CD14-positive monocyte (primary cell): ENCODE measurements at regions of chr7 and their contacts with region 1.

Region 1: GRCh38 chr7:24812310-24812945 is 55.2 kb upstream of the GSDME start:
- DNase-seq: peak; percentile 45 to 58 (median 54)
- H3K4me3 ChIP-seq: no peak overlapping the region
- H3K4me3 Mint-ChIP-seq: no peak overlapping the region
- H3K27ac ChIP-seq: no peak overlapping the region
- H3K27ac Mint-ChIP-seq: no peak overlapping the region
- H3K4me1 ChIP-seq: no peaks in the 10 kb centered on the region
- H3K4me1 Mint-ChIP-seq: peaks cover 5% of the 10 kb centered on the region
- H3K27me3 ChIP-seq: no peaks in the 10 kb centered on the region
- H3K27me3 Mint-ChIP-seq: no peaks in the 10 kb centered on the region
- CTCF ChIP-seq: peak; percentile 92

Region 2: GRCh38 chr7:24685708-24686107 is 126.7 kb before region 1 on chr7:
- intact Hi-C with region 1: no loop called
- DNase-seq: no peak
- H3K4me3 ChIP-seq: no peak overlapping the region
- H3K4me3 Mint-ChIP-seq: no peak overlapping the region
- H3K27ac ChIP-seq: no peak overlapping the region
- H3K27ac Mint-ChIP-seq: no peak overlapping the region
- H3K4me1 ChIP-seq: no peaks in the 10 kb centered on the region
- H3K4me1 Mint-ChIP-seq: peaks cover 3% of the 10 kb centered on the region
- H3K27me3 ChIP-seq: no peaks in the 10 kb centered on the region
- H3K27me3 Mint-ChIP-seq: no peaks in the 10 kb centered on the region
- CTCF ChIP-seq: no peak

Region 3: DNA sequence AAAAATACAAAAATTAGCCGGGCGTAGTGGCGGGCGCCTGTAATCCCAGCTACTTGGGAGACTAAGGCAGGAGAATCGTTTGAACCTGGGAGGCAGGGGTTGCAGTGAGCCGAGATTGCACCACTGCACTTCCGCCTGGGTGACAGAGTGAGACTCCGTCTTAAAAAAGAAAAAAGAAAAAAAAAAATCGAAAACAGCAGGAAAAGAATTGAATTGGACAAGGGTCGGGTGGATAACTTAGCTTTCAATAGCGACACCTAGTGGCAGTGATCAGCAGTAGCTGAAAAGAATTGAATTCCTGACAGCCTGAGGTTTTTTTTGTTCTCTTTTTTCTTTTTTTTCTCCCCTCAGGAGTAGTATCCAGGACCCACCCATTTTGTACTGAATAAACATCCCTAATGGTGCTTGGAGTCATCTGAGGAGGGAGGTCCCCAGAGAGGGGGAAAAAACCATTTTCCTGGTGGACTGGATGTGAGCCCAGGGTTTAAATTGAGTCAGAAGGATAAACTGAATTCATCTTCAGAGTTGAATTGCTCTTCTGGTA is 257.5 kb after region 1 on chr7:
- intact Hi-C with region 1: loop called (anchors 5 kb)
- DNase-seq: peak; percentile 47 to 68 (median 67)
- H3K4me3 ChIP-seq: no peak overlapping the region
- H3K4me3 Mint-ChIP-seq: peak overlapping the region in 1 of 2 donors; percentile 51
- H3K27ac ChIP-seq: no peak overlapping the region
- H3K27ac Mint-ChIP-seq: no peak overlapping the region
- H3K4me1 ChIP-seq: no peaks in the 10 kb centered on the region
- H3K4me1 Mint-ChIP-seq: peaks cover 4% of the 10 kb centered on the region
- H3K27me3 ChIP-seq: no peaks in the 10 kb centered on the region
- H3K27me3 Mint-ChIP-seq: peaks cover 6 to 11% (median 6%) of the 10 kb centered on the region in 3 donors
- CTCF ChIP-seq: peak; percentile 93

Region 4: DNA sequence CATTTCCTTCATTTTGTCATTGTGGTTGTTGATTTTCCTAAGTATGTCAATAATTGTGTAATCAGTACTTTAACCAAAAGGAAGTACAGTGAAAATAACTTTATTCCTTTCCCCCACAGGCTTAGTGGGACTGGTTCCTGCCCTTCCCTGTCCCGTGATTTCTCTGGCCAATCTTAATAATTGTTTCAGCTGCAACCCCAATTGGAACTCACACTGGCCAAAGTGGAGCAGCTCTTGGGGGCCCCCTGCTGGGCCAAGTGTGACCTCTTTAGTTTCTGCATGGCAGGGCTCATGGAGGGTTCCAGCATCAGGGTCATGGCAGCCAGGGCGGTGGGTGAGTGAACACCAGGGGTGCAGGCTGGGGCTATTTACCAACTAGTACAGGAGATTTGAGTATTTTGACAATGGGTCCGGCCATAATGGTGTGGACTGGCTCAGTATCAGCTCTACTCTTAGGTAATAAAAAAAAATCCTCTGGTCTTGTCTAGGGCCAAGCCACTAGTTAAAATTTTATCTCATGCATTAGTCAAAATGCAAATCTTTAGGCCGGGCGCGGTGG is 280.9 kb after region 1 on chr7:
- intact Hi-C with region 1: loop called (anchors 5 kb)
- DNase-seq: peak; percentile 50 to 72 (median 65)
- H3K4me3 ChIP-seq: no peak overlapping the region
- H3K4me3 Mint-ChIP-seq: no peak overlapping the region
- H3K27ac ChIP-seq: no peak overlapping the region
- H3K27ac Mint-ChIP-seq: no peak overlapping the region
- H3K4me1 ChIP-seq: peaks cover 13% of the 10 kb centered on the region in 2 donors
- H3K4me1 Mint-ChIP-seq: peaks cover 13% of the 10 kb centered on the region
- H3K27me3 ChIP-seq: no peaks in the 10 kb centered on the region
- H3K27me3 Mint-ChIP-seq: peaks cover 1 to 6% (median 3%) of the 10 kb centered on the region in 3 donors
- CTCF ChIP-seq: peak; percentile 69